ENCODE measurements at regions of chr6 and their contacts with region 1.

Region 1: DNA sequence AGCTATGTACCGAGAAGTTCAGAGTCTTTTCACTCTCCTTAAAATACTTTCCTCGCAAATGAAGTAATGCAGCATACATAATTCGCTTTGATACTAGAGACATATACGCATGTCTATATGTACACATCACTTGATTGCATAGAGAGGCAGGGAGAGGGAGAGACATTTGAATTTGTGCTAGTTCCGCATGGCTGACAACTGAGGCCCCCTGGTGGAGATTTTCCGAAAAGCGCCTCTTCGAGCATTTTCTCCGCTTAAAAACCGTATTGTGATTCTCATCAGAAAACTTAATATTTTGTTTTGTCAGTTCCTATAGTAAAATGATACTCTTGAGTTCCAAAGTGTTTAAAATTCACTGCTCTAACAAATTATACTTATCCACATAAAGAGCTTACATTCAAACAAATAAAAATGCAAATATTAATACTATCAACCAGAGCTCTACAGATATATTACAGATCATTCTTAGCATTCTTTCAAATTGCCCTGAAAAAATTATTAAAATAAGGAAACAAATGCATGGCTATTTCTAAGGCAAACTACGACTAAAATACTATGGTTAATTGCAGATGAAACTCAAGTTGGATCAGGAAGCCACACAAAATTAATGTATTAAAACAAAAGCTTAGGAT is 637 bp downstream of the MYLK4 start:
- DNase-seq: no peak
- H3K4me3 ChIP-seq: no peak overlapping the region
- CTCF ChIP-seq: peak; percentile 68

Region 2: GRCh38 chr6:2285510-2285909 is 464.6 kb before region 1 on chr6:
- CTCF ChIA-PET with region 1: no interaction called
- POLR2A ChIA-PET with region 1: no interaction called
- DNase-seq: no peak
- H3K4me3 ChIP-seq: no peak overlapping the region
- CTCF ChIP-seq: no peak

Region 3: DNA sequence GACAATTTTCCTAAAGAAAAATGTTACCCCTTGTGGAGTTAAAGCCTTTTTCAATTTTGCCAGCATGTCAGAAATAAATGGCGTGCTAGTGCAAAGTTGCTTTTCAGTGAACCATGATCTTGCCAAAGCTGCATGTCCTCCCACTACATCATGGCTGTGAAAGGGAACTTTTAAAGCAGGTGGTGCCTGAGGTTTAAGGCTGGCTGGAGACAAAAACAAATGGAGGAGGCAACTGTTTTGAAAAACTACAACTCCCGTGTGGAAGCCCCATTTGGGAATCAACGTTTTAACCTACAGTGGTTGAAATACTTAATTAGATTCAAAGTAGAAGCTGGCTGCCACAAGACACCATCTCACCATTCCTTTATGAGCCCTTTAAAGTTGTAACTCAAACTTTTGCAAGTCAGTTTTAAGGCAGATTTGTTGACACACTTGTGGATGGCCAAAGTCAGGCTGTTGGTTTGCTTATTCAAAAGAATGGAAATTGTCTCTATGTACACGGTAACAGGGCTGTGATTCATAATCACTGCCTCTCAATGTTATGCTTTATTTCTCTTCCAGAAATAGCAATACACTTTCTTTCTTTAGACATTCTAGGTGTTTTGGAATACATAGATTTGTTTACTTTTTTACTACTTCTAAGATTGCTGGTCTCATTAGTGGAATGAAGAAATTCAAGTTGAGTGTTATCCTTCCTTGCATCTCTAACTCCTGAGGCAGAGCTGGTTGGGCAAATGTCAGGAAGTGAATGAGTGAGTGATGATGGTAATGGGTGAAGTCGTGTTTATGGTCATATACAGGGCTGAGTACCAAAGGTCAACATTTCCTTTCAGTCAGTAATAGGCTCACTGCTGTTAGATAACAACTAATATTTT is 308.2 kb before region 1 on chr6:
- CTCF ChIA-PET with region 1: no interaction called
- POLR2A ChIA-PET with region 1: no interaction called
- DNase-seq: no peak
- H3K4me3 ChIP-seq: no peak overlapping the region
- CTCF ChIP-seq: no peak

Region 4: DNA sequence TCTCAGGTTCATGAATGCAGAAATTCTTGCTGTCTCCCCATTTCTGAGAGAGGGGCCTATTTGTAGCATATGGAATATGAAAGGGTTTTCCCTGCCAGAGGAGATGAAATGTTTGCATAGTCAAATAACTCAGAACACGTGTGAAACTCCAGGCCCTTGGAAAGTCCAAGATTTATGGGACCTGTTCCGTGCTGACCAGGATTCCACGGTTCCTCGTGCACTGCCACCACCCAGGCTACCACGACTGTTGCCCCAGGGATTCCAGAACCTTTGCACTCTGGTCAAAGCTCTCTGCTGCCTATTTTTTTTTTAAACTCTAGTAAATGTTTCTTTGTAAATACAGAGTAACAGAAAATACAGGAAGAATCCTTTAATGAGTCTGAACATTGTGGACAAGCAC is 34.4 kb before region 1 on chr6:
- CTCF ChIA-PET with region 1: interaction called, 12 read pairs
- POLR2A ChIA-PET with region 1: no interaction called
- DNase-seq: no peak
- H3K4me3 ChIP-seq: no peak overlapping the region
- CTCF ChIP-seq: no peak

Region 5: DNA sequence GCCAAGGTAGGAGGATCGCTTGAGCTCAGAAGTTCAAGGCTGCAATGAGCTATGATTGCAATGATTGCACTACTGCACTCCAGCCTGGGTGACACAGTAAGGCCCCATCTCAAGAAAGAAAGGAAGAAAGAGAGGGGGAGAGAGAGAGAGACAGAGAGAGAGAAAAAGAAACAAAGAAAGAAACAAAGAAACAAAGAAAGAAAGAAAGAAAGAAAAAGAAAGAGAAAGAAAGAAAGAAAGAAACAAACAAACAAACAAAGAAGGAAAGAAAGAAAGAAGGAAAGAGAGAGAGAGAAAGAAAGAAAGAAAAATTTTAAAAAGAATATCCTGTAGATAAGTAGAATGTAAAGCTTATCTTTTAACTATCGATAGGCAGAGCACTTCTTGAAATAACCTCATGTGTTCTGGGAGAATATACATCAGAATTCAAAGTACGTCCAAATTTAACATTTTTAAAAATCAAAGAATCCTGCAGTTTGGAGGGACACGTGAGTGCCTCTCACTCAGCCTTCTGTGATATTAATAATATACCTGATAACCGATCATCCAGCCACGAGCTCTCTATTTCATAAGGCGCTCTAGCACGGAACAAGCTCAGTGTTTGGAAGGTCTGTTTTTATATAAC is 24.6 kb before region 1 on chr6:
- CTCF ChIA-PET with region 1: interaction called, 18 read pairs
- POLR2A ChIA-PET with region 1: no interaction called
- DNase-seq: no peak
- H3K4me3 ChIP-seq: no peak overlapping the region
- CTCF ChIP-seq: no peak

Region 6: GRCh38 chr6:2733324-2733723 is 16.8 kb before region 1 on chr6:
- CTCF ChIA-PET with region 1: interaction called, 143 read pairs
- POLR2A ChIA-PET with region 1: no interaction called
- DNase-seq: no peak
- H3K4me3 ChIP-seq: no peak overlapping the region
- CTCF ChIP-seq: no peak

Region 7: GRCh38 chr6:2738373-2738979 is 11.6 kb before region 1 on chr6:
- CTCF ChIA-PET with region 1: interaction called, 143 read pairs
- POLR2A ChIA-PET with region 1: no interaction called
- DNase-seq: no peak
- H3K4me3 ChIP-seq: no peak overlapping the region
- CTCF ChIP-seq: peak; percentile 62

Region 8: DNA sequence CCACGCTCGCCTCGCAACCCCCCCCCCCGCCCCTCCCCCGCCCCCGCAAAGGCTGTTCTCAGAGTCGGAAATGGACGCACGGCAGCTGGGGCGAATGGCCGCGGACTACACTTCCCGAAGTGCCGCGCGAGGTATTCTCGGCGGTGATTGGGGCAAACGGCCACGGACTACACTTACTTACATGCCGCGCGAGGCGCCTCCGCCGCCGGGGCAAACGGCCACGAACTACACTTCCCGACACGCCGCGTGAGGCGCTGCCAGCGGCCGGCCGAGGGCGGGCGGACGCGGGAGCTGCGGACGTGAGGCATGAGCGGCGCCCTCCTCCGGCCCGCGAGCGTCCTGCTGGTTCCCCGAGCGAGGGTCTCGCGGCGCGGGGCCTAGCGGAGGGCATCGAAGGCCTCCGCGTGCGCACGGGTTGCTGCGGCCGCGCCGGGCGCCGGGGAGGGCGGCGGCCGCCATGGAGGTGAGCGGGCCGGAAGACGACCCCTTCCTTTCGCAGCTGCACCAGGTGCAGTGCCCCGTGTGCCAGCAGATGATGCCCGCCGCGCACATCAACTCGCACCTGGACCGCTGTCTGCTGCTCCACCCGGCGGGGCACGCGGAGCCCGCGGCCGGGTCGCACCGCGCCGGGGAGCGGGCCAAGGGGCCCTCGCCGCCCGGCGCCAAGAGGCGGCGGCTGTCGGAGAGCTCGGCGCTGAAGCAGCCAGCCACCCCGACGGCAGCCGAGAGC is 15.2 kb after region 1 on chr6 and contains the start of gene WRNIP1:
- CTCF ChIA-PET with region 1: interaction called, 189 read pairs
- POLR2A ChIA-PET with region 1: no interaction called
- DNase-seq: peak; percentile 92
- H3K4me3 ChIP-seq: peak within 1 kb of the TSS; percentile 83
- CTCF ChIP-seq: peak; percentile 73

Region 9: DNA sequence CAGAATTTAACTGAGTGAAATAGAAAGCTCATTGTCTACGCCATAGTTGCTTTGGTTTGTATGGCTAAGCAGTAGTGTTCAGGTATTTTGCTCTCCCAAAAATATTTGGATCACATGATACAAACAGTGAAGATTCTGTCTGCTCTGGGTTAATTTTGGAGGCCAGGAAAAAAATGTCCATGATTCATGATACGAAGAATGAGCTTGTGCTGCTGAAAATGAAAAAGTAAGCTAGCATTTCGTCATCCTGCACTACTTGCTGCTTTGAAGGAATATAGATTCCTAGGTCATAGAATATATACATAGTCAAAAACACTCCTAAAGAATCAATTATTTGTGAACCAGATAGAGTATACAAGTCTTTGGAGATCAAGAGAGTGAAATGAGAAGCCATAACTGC is 23.4 kb after region 1 on chr6:
- CTCF ChIA-PET with region 1: interaction called, 189 read pairs
- POLR2A ChIA-PET with region 1: no interaction called
- DNase-seq: no peak
- H3K4me3 ChIP-seq: no peak overlapping the region
- CTCF ChIP-seq: no peak